CD14-positive monocyte (primary cell): ENCODE measurements at regions of chr1 and their contacts with region 1.

Region 1: GRCh38 chr1:2115681-2116341 is 65.6 kb downstream of the PRKCZ start:
- DNase-seq: no peak
- H3K4me3 ChIP-seq: no peak overlapping the region
- H3K4me3 Mint-ChIP-seq: no peak overlapping the region
- H3K27ac ChIP-seq: no peak overlapping the region
- H3K27ac Mint-ChIP-seq: no peak overlapping the region
- H3K4me1 ChIP-seq: peaks cover 18 to 19% of the 10 kb centered on the region in 2 donors
- H3K4me1 Mint-ChIP-seq: peaks cover 12% of the 10 kb centered on the region
- H3K27me3 ChIP-seq: no peaks in the 10 kb centered on the region
- H3K27me3 Mint-ChIP-seq: peaks cover 2 to 4% (median 4%) of the 10 kb centered on the region in 3 donors
- CTCF ChIP-seq: no peak

Region 2: GRCh38 chr1:2067393-2067792 is 48.4 kb before region 1 on chr1:
- intact Hi-C with region 1: loop called in 1 of 2 experiments (anchors 5 kb)
- DNase-seq: no peak
- H3K4me3 ChIP-seq: no peak overlapping the region
- H3K4me3 Mint-ChIP-seq: no peak overlapping the region
- H3K27ac ChIP-seq: no peak overlapping the region
- H3K27ac Mint-ChIP-seq: no peak overlapping the region
- H3K4me1 ChIP-seq: no peaks in the 10 kb centered on the region
- H3K4me1 Mint-ChIP-seq: no peaks in the 10 kb centered on the region
- H3K27me3 ChIP-seq: no peaks in the 10 kb centered on the region
- H3K27me3 Mint-ChIP-seq: peaks cover 0 to 4% (median 0%) of the 10 kb centered on the region in 3 donors
- CTCF ChIP-seq: no peak

Region 3: GRCh38 chr1:2240270-2241156 is 124.7 kb after region 1 on chr1:
- intact Hi-C with region 1: no loop called
- DNase-seq: peak in 2 of 3 donors; percentile 52 to 75
- H3K4me3 ChIP-seq: no peak overlapping the region
- H3K4me3 Mint-ChIP-seq: peak overlapping the region; percentile 18 to 49
- H3K27ac ChIP-seq: no peak overlapping the region
- H3K27ac Mint-ChIP-seq: peak overlapping the region in 5 of 7 donors; percentile 38 to 79 (median 73)
- H3K4me1 ChIP-seq: peaks cover 48 to 57% of the 10 kb centered on the region in 2 donors
- H3K4me1 Mint-ChIP-seq: peaks cover 71% of the 10 kb centered on the region
- H3K27me3 ChIP-seq: no peaks in the 10 kb centered on the region
- H3K27me3 Mint-ChIP-seq: peaks cover 8 to 14% (median 9%) of the 10 kb centered on the region in 3 donors
- CTCF ChIP-seq: no peak